HEK293T (cell line): ENCODE measurements at regions of chr15 and their contacts with region 1.

Region 1: GRCh38 chr15:68550481-68551295 is 28.1 kb upstream of the CORO2B start:
- DNase-seq: peak; percentile 68

Region 2: DNA sequence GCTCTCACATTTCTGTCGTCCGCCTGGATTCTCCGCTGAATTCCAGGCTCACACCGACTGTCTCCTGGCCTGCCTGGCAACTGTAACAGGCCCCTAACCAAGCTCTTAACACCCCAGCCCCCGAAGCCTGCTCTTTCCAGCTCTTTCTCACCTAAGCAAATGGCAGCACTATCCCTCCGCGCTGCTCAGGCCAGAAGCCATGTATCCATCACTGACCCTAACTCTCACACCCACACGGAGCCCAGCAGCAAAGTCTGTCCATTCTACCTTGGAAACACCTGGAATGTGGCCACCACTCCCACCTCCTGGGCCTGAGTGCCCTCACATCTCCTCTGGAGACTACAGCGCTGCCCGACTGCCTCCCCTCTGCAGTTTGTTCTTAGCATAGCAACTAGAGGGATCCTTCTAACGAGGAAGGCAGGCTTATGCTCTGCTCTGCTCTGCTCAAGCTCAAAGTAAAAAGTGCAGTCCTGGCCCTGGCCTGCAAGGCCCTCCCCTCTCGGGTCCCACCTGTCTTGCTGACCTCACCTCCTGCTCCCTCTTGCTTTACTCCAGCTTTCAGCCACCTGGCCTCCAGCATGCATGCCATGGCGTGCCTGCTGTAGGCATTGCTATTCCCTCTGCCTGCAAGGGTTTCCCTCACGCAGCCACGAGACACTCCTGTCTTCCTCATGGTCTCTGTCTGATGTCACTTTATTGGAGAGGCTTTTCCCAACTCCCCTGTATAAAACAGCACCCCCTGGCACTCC is 245.9 kb before region 1 on chr15:
- CTCF ChIA-PET with region 1: interaction called, 12 read pairs
- POLR2A ChIA-PET with region 1: no interaction called
- DNase-seq: no peak

Region 3: DNA sequence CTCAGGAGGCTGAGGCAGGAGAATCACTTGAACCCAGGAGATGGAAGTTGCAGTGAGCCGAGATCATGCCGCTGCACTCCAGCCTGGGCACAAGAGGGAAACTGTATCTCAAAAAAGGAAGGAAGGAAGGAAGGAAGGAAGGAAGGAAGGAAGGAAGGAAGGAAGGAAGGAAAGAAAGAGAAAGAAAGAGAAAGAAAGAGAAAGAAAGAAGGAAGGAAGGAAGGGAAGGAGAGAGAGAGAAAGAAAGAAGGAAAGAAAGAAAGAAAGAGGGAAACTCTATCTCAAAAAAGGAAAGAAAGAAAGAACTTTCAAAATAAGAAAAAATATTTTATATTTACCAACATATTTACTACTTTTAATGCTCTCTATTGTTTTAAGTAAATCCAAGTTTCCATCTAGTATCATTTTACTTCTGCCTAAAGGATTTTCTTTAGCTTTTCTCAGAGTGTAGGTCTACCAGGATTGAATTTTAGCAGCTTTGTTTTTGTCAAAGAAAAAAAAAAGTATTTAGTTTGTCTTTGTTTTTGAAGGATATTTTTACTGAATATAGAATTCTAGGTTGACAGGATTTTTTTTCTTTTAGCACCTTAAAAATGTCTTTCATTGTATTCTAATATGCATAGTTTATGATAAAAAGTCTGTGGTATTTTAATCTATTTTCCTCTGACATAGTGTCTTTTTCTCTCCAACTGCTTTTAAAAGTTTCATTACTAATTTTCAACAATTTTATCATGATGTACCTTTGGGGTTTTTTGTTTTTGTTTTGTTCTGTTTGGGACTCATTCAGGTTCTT is 19.1 kb before region 1 on chr15:
- CTCF ChIA-PET with region 1: interaction called, 15 read pairs
- POLR2A ChIA-PET with region 1: no interaction called
- DNase-seq: no peak

Region 4: DNA sequence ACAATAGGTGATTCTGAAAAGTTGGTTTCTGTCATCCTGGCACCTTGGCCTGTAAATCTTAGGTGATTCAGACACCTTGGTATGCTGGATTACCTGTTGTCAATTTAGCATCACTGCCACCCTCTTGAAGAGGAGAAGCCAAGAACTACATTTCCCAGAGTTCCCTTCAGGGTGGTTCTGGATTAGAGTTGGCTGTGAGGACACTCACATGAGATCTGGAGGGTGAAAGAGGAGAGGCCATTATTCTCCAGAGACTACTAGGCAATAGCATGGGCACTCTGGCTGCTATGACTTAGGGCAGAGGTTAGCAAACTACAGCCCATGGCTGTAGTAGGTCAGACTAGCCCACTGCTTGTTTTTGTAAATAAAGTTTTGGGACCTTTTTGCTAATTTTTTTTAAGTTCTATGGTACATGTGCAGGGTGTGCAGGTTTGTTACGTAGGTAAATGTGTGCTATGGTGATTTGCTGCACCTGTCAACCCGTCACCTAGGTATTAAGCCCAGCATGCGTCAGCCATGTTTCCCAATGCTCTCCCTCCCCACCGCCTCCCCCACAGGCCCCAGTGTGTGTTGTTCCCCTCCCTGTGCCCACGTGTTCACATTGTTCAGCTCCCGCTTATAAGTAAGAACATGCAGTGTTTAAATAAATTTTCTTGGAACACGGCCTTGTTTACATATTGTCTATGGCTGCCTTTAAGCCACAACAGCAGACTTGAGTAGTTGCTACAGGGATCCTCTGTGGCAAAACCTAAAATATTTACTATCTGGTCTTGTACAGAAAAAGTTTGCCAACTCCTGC is 13.4 kb before region 1 on chr15:
- CTCF ChIA-PET with region 1: interaction called, 15 read pairs
- POLR2A ChIA-PET with region 1: no interaction called
- DNase-seq: no peak

Region 5: DNA sequence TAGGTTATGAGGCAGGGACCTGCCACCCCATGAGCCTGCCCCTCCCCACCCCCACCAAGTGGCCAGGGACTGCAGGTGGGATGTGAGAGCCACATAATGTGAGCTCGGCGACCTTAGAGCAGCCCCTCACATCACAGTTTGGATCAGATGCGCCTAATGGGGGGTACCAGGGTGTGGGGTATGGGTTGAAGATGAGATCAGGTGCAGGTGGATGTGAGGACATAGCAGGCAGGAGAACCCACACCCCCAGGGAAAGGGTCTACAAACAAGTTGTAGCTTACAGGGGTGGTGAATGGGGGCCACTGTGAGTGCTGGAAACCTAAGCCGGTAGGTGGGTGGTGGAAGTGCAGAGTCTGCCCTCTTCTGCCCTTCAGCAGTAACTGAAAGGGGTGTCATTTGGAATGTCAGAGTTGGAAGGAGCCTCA is 122.1 kb after region 1 on chr15:
- CTCF ChIA-PET with region 1: interaction called, 29 read pairs
- POLR2A ChIA-PET with region 1: no interaction called
- DNase-seq: no peak

Region 6: GRCh38 chr15:68763063-68763462 is 212.4 kb after region 1 on chr15:
- CTCF ChIA-PET with region 1: interaction called, 11 read pairs
- POLR2A ChIA-PET with region 1: no interaction called
- DNase-seq: no peak

Region 7: GRCh38 chr15:68924866-68925560 is 374.3 kb after region 1 on chr15:
- CTCF ChIA-PET with region 1: interaction called, 23 read pairs
- POLR2A ChIA-PET with region 1: no interaction called
- DNase-seq: peak; percentile 87